AG04450 (cell line): ENCODE measurements at regions of chr2 and their contacts with region 1.

Region 1: DNA sequence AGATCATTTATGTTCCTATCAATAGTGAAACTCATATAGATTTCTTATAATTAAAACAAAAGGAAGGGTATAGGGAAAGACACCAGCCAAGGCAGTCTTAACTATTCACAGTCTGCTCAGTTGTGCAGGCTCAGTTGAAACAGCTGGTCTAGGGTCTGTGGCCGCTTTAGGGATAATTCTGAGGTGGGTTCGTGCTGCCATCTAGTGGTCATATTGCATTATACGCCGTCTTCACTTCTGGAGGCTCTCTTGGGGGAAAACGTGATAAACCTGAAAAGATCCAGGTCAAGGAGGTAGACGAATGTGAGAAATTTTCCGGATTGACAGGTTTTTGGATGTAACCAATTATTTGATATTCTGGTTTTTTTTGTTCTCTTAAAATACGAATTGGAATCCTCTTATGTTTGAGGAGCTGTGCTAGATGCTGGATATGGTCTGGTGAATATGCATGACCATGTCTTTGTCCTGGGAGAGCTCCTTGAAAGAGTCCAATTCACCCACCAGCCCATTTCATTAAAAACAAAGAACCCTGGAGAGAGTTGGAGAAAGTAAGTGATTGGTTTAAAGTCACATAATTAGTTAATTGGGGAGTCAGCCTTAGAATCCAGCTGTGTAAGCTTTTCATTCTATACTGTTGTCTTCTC is 492.4 kb downstream of the PLCL1 start:
- DNase-seq: peak; percentile 24
- H3K4me3 ChIP-seq: no peak overlapping the region
- H3K27ac ChIP-seq: no peak overlapping the region
- H3K27me3 ChIP-seq: no peaks in the 10 kb centered on the region
- CTCF ChIP-seq: peak; percentile 71

Region 2: DNA sequence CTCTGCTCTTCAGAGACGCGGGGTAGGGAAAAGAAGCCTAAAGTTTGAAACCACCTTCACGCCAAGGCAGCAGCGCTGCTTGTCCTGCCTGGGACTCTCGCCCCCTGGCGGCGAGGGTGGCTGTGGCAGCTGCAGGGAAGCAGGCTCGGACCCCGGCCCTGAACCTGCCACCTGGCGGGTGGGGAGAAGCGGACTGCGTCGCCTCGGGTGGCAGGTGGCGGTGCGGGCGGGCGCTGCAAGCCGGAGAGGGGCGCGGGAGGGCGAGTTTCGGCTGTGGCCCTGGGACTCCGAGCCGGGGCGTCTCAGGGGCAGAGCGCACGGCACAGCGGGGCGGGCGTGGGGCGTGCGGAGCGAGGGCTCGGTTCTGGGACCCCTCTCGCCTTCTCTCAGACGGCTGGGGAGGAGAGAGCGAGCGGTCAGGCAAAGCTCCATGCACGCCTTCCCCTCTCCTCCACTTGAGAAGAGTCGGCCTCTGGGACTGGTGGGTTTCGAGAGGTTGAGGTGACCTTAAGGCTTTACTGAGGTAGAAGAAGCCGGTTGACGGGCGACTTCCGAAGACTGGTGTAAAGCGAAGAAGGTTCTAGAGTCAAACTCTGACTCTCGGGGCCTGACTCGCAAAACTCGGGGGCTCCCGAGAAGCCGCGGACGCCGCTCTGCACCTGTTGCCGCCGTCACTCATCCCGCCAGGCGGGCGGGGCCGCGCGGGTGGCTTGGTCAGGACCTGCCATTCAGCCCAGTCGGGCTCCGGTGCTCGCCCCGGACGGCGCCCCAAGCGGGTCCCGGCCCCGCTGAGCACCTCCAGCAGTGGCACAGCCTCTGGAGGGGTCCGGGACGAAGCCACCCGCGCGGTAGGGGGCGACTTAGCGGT is 510.5 kb before region 1 on chr2:
- CTCF ChIA-PET with region 1: interaction called, 13 read pairs
- POLR2A ChIA-PET with region 1: no interaction called
- DNase-seq: no peak
- H3K4me3 ChIP-seq: no peak overlapping the region
- H3K27ac ChIP-seq: no peak overlapping the region
- H3K27me3 ChIP-seq: peaks cover 4% of the 10 kb centered on the region
- CTCF ChIP-seq: peak; percentile 32

Region 3: DNA sequence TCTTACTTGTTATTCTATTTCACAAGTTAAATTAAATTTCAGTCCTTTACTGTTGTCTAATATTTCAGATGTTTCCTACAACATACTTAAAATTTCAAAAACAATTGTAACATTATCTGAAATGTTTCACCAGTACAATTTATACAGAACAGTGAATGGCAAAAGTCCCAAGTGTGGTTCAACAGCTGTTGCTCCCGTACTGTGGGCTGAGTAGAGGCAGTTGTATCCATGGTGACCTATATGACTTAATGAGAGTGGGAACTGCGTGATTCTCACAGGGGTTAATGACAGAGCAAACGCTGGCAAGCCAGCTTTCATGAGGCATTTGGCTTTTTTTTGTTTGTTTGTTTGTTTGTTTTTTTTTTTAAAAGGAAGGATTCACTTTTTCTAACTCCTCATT is 497.7 kb before region 1 on chr2:
- CTCF ChIA-PET with region 1: interaction called, 32 read pairs
- POLR2A ChIA-PET with region 1: no interaction called
- DNase-seq: no peak
- H3K4me3 ChIP-seq: no peak overlapping the region
- H3K27ac ChIP-seq: no peak overlapping the region
- H3K27me3 ChIP-seq: peaks cover 8% of the 10 kb centered on the region
- CTCF ChIP-seq: no peak

Region 4: GRCh38 chr2:197804049-197804757 is 492.6 kb before region 1 on chr2 and contains the start of gene PLCL1:
- CTCF ChIA-PET with region 1: interaction called, 32 read pairs
- POLR2A ChIA-PET with region 1: no interaction called
- DNase-seq: peak; percentile 80
- H3K4me3 ChIP-seq: peak within 1 kb of the TSS; percentile 66
- H3K27ac ChIP-seq: no peak within 1 kb of the TSS
- H3K27me3 ChIP-seq: peaks cover 13% of the 10 kb centered on the region
- CTCF ChIP-seq: no peak
- polyA plus RNA-seq, gene PLCL1: 0.22 and 0.43 TPM in 2 replicates

Region 5: DNA sequence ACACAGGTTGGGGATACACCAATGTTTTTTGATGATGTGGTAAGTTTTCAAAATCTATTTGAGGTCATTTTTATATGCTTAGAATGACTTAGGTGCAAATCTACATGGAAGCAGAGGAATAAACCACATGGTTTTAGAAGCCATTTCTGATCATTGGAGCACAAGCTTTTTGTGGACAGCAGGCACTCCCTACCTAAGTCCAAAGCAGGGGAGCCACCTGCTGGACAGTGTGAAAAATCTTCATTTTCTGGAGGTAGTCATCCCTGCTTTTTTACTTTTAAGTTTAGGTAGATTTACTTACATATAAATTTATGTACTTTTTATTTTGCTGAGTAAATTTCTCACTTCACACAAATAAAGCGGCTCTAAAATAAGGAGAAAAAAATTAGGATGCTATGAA is 169.2 kb before region 1 on chr2:
- CTCF ChIA-PET with region 1: interaction called, 17 read pairs
- POLR2A ChIA-PET with region 1: no interaction called
- DNase-seq: peak; percentile 38
- H3K4me3 ChIP-seq: no peak overlapping the region
- H3K27ac ChIP-seq: no peak overlapping the region
- H3K27me3 ChIP-seq: no peaks in the 10 kb centered on the region
- CTCF ChIP-seq: peak; percentile 76

Region 6: DNA sequence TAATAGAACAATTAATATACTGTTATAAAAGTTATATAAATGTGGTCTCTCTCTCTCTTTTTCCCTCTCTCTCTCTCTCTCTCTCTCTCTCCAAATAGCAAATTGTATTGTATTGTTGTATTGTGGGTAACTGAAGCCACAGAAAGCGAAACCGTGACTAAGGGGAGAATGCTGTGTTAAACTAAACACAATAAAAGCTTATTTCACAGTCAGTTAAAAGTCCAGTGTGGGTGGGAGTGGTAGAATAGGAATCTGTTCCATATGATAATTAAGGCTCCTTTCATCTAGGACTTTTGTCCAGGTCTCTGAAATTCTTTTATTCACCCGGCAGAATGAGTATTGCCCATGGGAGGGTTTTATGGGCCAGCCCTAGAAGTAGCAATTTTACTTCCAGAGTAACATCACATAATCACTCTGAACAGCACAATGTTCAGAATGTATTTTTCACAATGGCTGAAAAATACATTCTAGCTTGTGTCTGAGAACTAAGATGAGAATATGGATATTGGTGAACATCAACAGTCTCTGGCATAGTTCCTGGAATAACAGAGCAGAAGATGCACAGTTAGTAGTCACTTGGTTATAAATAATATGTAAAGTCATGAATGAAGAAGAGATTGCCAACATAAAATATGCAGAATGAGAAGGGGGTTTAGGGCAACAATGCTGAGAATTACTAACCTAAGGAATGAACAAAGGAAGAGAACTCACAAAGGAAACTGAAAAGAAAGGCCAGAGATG is 93.3 kb before region 1 on chr2:
- CTCF ChIA-PET with region 1: no interaction called
- POLR2A ChIA-PET with region 1: no interaction called
- DNase-seq: no peak
- H3K4me3 ChIP-seq: no peak overlapping the region
- H3K27ac ChIP-seq: no peak overlapping the region
- H3K27me3 ChIP-seq: no peaks in the 10 kb centered on the region
- CTCF ChIP-seq: no peak

Region 7: GRCh38 chr2:198279026-198279425 is 17.8 kb before region 1 on chr2:
- CTCF ChIA-PET with region 1: interaction called, 13 read pairs
- POLR2A ChIA-PET with region 1: no interaction called
- DNase-seq: no peak
- H3K4me3 ChIP-seq: no peak overlapping the region
- H3K27ac ChIP-seq: no peak overlapping the region
- H3K27me3 ChIP-seq: no peaks in the 10 kb centered on the region
- CTCF ChIP-seq: no peak

Region 8: DNA sequence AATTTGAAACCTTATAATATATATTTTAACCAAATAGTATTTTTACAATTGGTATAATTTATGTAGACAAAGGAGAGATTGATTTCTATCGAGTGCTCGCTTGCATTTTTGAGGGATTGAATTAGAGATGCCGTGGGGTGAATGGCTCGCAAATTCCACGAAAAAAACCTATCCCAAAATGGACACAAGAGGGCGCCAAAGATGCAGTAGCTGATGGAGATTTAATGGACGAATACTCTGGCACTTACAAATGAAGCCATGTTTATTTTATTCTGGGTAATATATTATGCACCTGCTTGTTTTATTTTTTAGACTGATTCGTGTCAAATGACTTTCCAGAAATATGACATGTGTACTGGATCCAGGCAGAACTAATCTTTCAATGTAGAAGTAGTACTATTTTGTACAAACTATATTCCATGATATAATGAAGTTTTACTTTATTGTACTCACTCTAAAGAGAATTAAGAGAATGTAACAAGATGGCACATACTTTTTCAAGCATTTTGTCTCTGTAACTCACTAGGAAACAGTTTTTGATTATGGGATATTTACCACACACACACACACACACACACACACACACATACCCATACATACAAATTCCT is 13.0 kb after region 1 on chr2:
- CTCF ChIA-PET with region 1: interaction called, 55 read pairs
- POLR2A ChIA-PET with region 1: no interaction called
- DNase-seq: peak; percentile 10
- H3K4me3 ChIP-seq: no peak overlapping the region
- H3K27ac ChIP-seq: no peak overlapping the region
- H3K27me3 ChIP-seq: no peaks in the 10 kb centered on the region
- CTCF ChIP-seq: peak; percentile 91

Region 9: GRCh38 chr2:200086911-200087310 is 1790.1 kb after region 1 on chr2:
- CTCF ChIA-PET with region 1: no interaction called
- POLR2A ChIA-PET with region 1: no interaction called
- DNase-seq: no peak
- H3K4me3 ChIP-seq: no peak overlapping the region
- H3K27ac ChIP-seq: no peak overlapping the region
- H3K27me3 ChIP-seq: no peaks in the 10 kb centered on the region
- CTCF ChIP-seq: no peak